Activated naive CD4-positive, alpha-beta T cell treated with anti-CD3 and anti-CD28 coated beads for 36 hours (primary cell): ENCODE measurements at regions of chr3 and their contacts with region 1.

Region 1: DNA sequence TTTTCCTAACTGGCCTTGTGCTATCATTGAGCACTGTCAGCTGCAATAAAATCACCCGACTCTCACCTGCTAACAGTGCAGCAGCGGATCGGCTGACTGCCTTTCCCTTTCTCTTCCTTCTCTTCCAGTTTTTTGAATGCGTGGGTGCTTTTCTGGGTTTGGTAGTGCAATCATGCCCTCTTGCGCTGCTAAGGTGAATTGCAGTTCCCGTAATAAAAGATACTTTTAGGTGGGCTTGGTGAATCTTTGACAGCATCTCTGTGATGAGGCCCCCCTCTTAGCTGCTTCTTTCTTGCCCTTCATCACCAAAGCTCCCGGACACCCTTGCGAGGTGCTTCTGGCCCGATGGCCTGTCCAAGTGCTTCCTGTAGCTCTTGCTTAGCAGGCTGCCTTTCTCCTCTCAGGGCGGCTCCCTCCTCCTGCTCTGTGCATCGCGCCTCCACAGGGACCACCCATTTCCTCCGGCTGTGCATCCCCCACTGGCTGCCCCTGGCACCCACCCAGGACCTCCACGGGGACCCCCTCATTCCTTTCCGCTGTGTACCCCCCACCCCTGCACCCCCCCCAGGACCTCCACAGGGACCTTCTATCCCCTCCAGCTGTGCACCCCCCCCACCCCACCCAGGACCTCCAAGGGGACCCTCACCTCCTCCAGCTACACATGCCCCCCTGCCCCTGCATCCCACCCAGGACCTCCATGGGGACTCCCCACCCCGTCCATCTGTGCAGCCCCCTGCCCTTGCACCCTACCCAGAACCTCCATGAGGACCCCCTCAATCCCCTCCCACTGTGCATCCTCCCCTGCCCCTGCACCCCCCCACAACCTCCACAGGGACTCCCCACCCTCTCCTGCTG is 50.8 kb upstream of the RPL32 start:
- DNase-seq: peak; percentile 63
- H3K4me3 Mint-ChIP-seq: no peak overlapping the region
- H3K27ac Mint-ChIP-seq: no peak overlapping the region
- H3K4me1 Mint-ChIP-seq: peaks cover 5% of the 10 kb centered on the region
- H3K27me3 Mint-ChIP-seq: no peaks in the 10 kb centered on the region

Region 2: DNA sequence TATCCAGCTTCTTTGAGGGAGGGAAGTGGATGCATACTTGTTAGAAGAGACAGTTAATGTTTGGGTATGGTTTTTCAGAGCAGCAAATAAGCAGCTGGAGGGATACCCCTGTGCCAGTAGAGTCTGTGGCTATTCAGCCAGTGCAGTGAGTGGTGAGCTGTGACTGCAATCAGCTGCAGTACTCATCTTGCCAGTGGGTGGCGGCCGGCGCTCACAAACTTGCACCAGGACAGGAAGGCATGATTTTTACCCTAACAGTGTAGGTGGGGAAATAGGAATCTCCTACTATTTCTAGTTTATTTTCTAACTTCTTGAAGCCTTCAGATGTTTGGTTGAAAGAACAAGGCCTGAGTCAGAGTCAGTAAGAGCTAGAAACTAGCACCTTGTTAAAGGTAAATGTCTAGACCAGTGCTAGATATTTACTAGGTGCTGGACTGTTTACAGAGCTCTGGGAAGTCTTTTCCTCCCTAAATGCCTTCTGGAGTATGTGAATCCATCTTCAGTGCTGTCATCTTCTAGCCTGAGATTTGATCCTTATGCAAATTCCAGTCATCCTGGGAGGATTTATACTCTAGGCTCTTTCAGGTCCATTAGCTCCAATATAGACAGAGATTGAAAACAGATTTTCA is 757.1 kb before region 1 on chr3:
- CTCF ChIA-PET with region 1: interaction called, 3 read pairs
- intact Hi-C with region 1: loop called (anchors 5 kb)
- DNase-seq: peak; percentile 80
- H3K4me3 Mint-ChIP-seq: no peak overlapping the region
- H3K27ac Mint-ChIP-seq: no peak overlapping the region
- H3K4me1 Mint-ChIP-seq: no peaks in the 10 kb centered on the region
- H3K27me3 Mint-ChIP-seq: peaks cover 11% of the 10 kb centered on the region

Region 3: GRCh38 chr3:12706504-12707253 is 185.5 kb before region 1 on chr3:
- CTCF ChIA-PET with region 1: no interaction called
- intact Hi-C with region 1: loop called (anchors 5 kb)
- DNase-seq: peak; percentile 80
- H3K4me3 Mint-ChIP-seq: no peak overlapping the region
- H3K27ac Mint-ChIP-seq: no peak overlapping the region
- H3K4me1 Mint-ChIP-seq: no peaks in the 10 kb centered on the region
- H3K27me3 Mint-ChIP-seq: no peaks in the 10 kb centered on the region

Region 4: DNA sequence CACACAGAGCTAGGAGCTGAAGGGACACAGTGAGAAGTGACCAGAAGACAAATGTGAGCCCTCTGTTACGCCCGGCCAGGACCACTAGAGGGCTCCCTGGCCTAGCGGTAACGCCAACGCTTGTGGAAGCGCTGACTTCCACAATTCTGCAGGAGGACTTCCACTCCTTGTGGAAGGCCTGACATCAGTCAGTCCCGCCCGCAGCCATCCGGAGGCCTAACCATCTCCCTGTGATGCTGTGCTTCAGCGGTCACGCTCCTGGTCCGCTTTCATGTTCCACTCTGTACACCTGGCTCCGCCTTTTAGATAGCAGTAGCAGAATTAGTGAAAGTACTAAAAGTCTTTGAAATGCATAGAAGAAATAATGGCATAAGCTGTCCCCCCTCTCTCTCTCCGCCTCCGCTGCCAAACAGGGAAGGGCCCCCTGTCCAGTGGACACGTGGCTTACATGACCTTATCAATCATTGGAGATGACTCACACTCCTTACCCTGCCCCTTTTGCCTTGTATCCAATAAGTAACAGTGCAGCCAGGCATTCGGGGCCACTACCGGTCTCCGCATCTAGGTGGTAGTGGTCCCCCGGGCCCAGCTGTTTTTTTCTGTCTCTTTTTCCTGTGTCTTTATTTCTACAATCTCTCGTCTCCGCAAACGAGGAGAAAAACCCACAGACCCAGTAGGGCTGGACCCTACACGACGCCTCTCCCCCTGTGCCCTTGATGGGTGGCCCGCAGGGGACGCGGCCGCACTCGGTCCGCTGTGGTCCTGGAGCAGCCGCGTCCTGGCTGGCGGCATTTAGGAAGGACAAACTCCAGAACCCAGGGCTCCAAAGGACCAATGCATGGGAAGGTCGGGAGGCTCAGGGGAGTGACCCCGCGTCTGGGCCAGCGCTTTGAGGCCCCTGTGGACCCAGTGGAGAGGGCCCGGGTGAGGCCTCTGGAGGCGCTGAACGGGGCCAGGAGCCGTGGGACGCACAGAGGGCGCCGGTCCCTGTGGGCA is 23.9 kb before region 1 on chr3:
- CTCF ChIA-PET with region 1: interaction called, 52 read pairs
- intact Hi-C with region 1: loop called (anchors 1 kb)
- DNase-seq: peak; percentile 71
- H3K4me3 Mint-ChIP-seq: peak overlapping the region; percentile 67
- H3K27ac Mint-ChIP-seq: no peak overlapping the region
- H3K4me1 Mint-ChIP-seq: peaks cover 7% of the 10 kb centered on the region
- H3K27me3 Mint-ChIP-seq: peaks cover 16% of the 10 kb centered on the region

Region 5: DNA sequence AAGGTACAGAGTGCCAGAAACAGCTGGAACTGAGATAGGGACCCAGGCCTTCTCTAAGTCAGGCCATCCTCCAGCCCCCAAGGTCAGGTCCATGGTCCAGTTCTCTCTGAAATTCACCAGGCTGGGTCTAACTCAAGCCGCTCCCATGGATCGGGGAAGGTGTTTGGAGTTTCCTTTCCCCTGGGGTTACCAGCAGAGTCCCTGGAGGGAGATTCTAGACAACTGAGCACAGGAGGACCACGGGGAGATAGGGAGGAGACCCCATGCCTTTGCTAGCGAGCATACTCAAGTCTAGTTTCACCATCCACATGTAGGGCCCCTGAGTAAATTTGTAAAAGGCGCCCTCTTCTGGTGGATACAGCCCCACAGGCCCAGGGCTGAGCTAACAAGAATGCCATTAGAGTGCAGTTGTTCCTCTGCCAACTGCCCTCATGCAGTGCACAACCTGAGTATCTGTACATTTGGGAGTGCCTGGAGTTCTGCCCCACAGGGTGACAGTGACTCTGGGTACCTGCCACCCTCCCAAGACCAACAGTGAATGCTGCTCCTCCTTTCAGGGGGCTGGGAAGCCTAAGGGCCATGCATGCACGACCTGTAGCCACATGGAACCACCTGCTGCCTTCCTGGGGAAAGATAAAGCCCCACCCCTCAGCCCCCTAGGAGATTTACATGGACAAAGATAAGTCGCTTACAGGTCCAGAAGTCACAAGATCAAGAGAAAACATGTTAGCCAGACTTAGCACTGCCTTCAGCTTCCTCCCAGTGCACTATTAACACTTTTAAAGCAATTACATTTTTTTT is 92.0 kb after region 1 on chr3:
- CTCF ChIA-PET with region 1: interaction called, 4 read pairs
- intact Hi-C with region 1: loop called (anchors 2 kb)
- DNase-seq: peak; percentile 84
- H3K4me3 Mint-ChIP-seq: no peak overlapping the region
- H3K27ac Mint-ChIP-seq: no peak overlapping the region
- H3K4me1 Mint-ChIP-seq: peaks cover 47% of the 10 kb centered on the region
- H3K27me3 Mint-ChIP-seq: no peaks in the 10 kb centered on the region

Region 6: GRCh38 chr3:13077431-13078162 is 185.4 kb after region 1 on chr3:
- CTCF ChIA-PET with region 1: no interaction called
- intact Hi-C with region 1: no loop called
- DNase-seq: no peak
- H3K4me3 Mint-ChIP-seq: no peak overlapping the region
- H3K27ac Mint-ChIP-seq: no peak overlapping the region
- H3K4me1 Mint-ChIP-seq: peaks cover 4% of the 10 kb centered on the region
- H3K27me3 Mint-ChIP-seq: peaks cover 16% of the 10 kb centered on the region